Right cardiac atrium (tissue), 5 donors: ENCODE measurements at regions of chr1 and their contacts with region 1.

Region 1: GRCh38 chr1:203351037-203352013 is at the start of gene FMOD:
- DNase-seq: peak; percentile 81 to 87 (median 85)
- ATAC-seq: peak; percentile 85 to 87
- H3K4me3 ChIP-seq: peak within 1 kb of the TSS; percentile 35
- H3K27ac ChIP-seq: peak within 1 kb of the TSS; percentile 58
- H3K4me1 ChIP-seq: peaks cover 9% of the 10 kb centered on the region
- H3K27me3 ChIP-seq: no peaks in the 10 kb centered on the region
- total RNA-seq, gene FMOD: 54.8 to 91.6 (median 63.5) TPM

Region 2: GRCh38 chr1:203475012-203475981 is 124.0 kb after region 1 on chr1 and contains the start of gene PRELP:
- intact Hi-C with region 1: loop called in 2 of 4 experiments (anchors 2 to 5 kb)
- DNase-seq: peak; percentile 52 to 79 (median 74)
- ATAC-seq: peak; percentile 66 to 80
- H3K4me3 ChIP-seq: peak within 1 kb of the TSS; percentile 86
- H3K27ac ChIP-seq: peak within 1 kb of the TSS; percentile 95
- H3K4me1 ChIP-seq: no peaks in the 10 kb centered on the region
- H3K27me3 ChIP-seq: no peaks in the 10 kb centered on the region
- total RNA-seq, gene PRELP: 43.9 to 109 (median 67.4) TPM